ENCODE measurements at regions of chr2 and their contacts with region 1.

Region 1: GRCh38 chr2:33583194-33583938 is 15.7 kb downstream of the FAM98A start:
- DNase-seq: peak in 5 of 7 donors; percentile 16 to 61 (median 35)
- H3K4me3 ChIP-seq: no peak overlapping the region
- H3K27ac ChIP-seq: no peak overlapping the region
- H3K4me1 ChIP-seq: peaks cover 0 to 4% of the 10 kb centered on the region in 2 donors
- H3K27me3 ChIP-seq: no peaks in the 10 kb centered on the region
- CTCF ChIP-seq: peak; percentile 62 to 87 (median 80)
- POLR2A ChIP-seq: no peak

Region 2: DNA sequence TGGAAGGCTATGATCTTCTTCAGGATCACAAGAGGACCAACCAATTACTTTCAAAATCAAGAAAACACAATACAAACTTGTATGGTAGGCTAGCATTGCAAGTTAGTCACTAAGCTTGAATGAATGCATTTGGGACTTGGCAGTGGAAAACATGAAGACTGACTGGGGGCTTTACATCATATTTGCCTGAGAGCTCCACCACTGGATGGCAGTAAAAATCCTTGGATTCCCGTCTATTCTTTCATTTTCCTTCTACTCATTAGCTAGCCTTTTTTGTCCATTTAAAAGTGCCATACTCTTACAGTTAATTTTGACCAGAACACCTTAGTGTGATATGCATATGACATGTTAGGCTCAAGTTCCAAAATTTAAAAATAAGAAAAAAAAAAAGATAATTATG is 170.4 kb before region 1 on chr2:
- intact Hi-C with region 1: loop called in 1 of 2 experiments (anchors 10 kb)
- DNase-seq: peak in 1 of 7 donors; percentile 5
- H3K4me3 ChIP-seq: no peak overlapping the region
- H3K27ac ChIP-seq: no peak overlapping the region
- H3K4me1 ChIP-seq: no peaks in the 10 kb centered on the region
- H3K27me3 ChIP-seq: no peaks in the 10 kb centered on the region
- CTCF ChIP-seq: peak in 4 of 6 experiments; percentile 33 to 47 (median 42)
- POLR2A ChIP-seq: no peak

Region 3: GRCh38 chr2:33475224-33476130 is 107.9 kb before region 1 on chr2:
- intact Hi-C with region 1: loop called in 1 of 2 experiments (anchors 10 kb)
- DNase-seq: peak; percentile 71 to 87 (median 81)
- H3K4me3 ChIP-seq: peak overlapping the region; percentile 1 to 85 (median 57)
- H3K27ac ChIP-seq: peak overlapping the region in 4 of 5 donors; percentile 73 to 91 (median 82)
- H3K4me1 ChIP-seq: peaks cover 6 to 14% of the 10 kb centered on the region in 2 donors
- H3K27me3 ChIP-seq: no peaks in the 10 kb centered on the region
- CTCF ChIP-seq: peak; percentile 57 to 84 (median 74)
- POLR2A ChIP-seq: no peak

Region 4: GRCh38 chr2:33709951-33710350 is 126.6 kb after region 1 on chr2:
- intact Hi-C with region 1: no loop called
- DNase-seq: no peak
- H3K4me3 ChIP-seq: no peak overlapping the region
- H3K27ac ChIP-seq: no peak overlapping the region
- H3K4me1 ChIP-seq: no peaks in the 10 kb centered on the region
- H3K27me3 ChIP-seq: no peaks in the 10 kb centered on the region
- CTCF ChIP-seq: no peak
- POLR2A ChIP-seq: no peak

Measured in adrenal gland (tissue), 19 donors.